AG04449 (cell line): ENCODE measurements at regions of chr18 and their contacts with region 1.

Region 1: DNA sequence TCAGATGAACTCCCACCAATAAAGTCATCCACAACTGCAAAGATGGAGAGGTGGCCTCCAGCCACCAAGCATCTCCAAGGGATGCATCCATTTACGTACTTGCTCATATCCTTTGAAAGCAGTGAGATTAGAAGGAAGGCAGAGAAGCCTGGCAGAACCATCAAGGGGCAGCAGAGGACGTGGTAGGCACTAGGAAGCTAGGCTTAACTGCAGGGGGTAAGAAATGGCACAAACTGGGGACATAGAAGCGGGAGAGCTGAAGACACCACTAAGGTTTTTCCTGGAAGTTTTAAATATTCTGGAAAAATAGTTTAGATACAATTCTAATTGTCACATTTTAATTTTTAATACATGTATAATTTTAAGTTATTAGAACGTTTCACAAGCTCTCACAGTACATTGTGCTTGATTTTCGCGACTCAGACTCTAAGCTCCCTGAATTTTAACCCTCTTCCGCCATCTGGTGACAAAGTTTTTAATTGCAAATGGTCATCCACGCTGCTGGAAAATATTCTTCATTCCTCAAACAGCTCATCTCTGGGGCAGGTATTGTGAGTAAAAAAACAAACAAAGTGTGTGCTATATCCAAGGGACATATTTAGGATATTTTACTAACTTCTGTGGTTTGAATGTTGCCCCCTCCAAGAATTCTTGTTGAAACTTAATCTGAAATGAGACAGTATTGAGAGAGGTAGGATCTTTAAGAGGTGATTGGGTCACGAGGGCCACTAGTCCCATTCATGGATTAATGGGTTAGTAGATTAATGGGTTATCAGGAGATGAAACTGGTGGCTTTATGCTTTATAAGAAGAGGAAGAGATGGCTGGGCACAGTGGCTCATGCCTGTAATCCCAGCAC is 1.6 kb upstream of the PSTPIP2 start:
- DNase-seq: no peak
- H3K4me3 ChIP-seq: no peak overlapping the region
- CTCF ChIP-seq: peak; percentile 43

Region 2: GRCh38 chr18:45910405-45911023 is 163.2 kb before region 1 on chr18:
- CTCF ChIA-PET with region 1: interaction called, 11 read pairs
- POLR2A ChIA-PET with region 1: no interaction called
- DNase-seq: no peak
- H3K4me3 ChIP-seq: no peak overlapping the region
- CTCF ChIP-seq: peak; percentile 82

Region 3: GRCh38 chr18:45920367-45920766 is 153.3 kb before region 1 on chr18:
- CTCF ChIA-PET with region 1: interaction called, 27 read pairs
- POLR2A ChIA-PET with region 1: no interaction called
- DNase-seq: peak; percentile 14
- H3K4me3 ChIP-seq: no peak overlapping the region
- CTCF ChIP-seq: no peak

Region 4: GRCh38 chr18:45974088-45974536 is 99.6 kb before region 1 on chr18:
- CTCF ChIA-PET with region 1: interaction called, 52 read pairs
- POLR2A ChIA-PET with region 1: no interaction called
- DNase-seq: peak; percentile 63
- H3K4me3 ChIP-seq: no peak overlapping the region
- CTCF ChIP-seq: peak; percentile 73

Region 5: DNA sequence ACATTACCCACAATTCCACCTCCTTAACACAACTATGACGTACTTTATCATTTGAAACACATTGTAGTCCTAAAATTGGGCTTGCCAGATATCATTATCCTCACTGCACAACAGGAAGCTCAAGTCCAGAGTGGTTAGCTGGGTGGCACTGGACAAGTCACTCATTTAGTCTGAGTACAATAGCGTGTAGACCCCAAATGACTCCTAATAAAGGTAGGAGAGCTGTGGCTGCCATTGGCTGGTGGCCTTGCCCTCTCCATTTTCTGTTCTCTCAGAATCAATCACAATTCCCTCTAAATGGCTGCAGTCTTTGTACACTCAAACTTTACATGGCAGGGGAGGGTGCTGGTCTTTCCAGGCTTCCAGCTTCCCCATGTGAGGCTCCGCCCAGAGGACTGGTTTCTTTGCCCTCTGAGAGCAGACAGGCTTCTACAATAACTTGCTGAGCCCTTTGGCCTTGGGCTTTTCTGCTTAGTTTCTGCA is 13.3 kb before region 1 on chr18:
- CTCF ChIA-PET with region 1: interaction called, 14 read pairs
- POLR2A ChIA-PET with region 1: no interaction called
- DNase-seq: no peak
- H3K4me3 ChIP-seq: no peak overlapping the region
- CTCF ChIP-seq: no peak

Region 6: GRCh38 chr18:46097801-46098615 is 24.3 kb after region 1 on chr18 and contains the start of gene ATP5F1A:
- CTCF ChIA-PET with region 1: interaction called, 32 read pairs
- POLR2A ChIA-PET with region 1: interaction called, 3 read pairs
- DNase-seq: no peak
- H3K4me3 ChIP-seq: peak within 1 kb of the TSS; percentile 97
- CTCF ChIP-seq: peak; percentile 12

Region 7: GRCh38 chr18:46891742-46892214 is 818.1 kb after region 1 on chr18:
- CTCF ChIA-PET with region 1: no interaction called
- POLR2A ChIA-PET with region 1: no interaction called
- DNase-seq: no peak
- H3K4me3 ChIP-seq: no peak overlapping the region
- CTCF ChIP-seq: no peak